Activated naive CD4-positive, alpha-beta T cell treated with anti-CD3 and anti-CD28 coated beads for 36 hours (primary cell): ENCODE measurements at regions of chr10 and their contacts with region 1.

Region 1: GRCh38 chr10:102713814-102714620 is at the start of gene ARL3:
- DNase-seq: peak; percentile 98
- H3K4me3 Mint-ChIP-seq: peak within 1 kb of the TSS; percentile 92
- H3K27ac Mint-ChIP-seq: peak within 1 kb of the TSS; percentile 79
- H3K4me1 Mint-ChIP-seq: peaks cover 44% of the 10 kb centered on the region
- H3K27me3 Mint-ChIP-seq: no peaks in the 10 kb centered on the region
- total RNA-seq, gene ARL3: 3.9 TPM

Region 2: DNA sequence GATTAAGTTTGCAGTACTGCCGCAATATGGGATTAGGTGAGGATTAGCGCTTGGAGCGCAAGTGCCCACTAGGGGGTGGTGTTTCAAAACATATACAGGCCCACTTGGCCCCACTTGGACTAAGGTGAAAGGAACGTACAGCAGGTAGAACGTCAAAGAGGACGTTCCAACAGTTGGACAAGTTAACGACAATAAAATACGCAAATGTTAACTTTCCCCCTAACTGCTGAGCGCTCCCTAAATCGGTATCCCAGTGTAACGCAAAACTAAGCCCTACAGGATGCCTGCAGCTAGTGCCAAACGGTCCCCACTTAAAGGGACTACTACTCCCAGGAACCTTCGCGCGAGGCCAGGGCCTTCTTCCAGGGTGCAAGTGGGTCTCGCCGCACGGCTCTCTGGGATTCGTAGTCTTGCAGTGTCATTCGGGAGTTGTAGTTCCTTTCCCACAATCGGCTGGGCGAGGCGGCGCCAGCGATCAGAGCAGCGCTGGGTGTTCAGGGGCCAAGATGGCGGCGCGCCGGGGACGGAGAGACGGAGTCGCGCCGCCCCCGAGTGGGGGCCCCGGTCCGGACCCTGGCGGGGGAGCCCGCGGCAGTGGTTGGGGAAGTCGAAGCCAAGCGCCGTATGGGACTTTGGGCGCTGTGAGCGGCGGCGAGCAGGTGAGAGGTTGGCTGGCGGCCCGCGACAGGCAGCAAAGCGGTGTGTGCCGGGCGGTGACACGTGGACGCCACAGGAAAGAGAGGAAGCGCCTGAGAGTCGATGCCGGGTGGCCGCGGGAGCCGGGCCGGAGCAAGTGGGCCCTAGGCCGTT is 581.2 kb before region 1 on chr10 and contains the start of gene PPRC1:
- CTCF ChIA-PET with region 1: no interaction called
- intact Hi-C with region 1: loop called (anchors 5 kb)
- DNase-seq: peak; percentile 99
- H3K4me3 Mint-ChIP-seq: peak within 1 kb of the TSS; percentile 97
- H3K27ac Mint-ChIP-seq: peak within 1 kb of the TSS; percentile 96
- H3K4me1 Mint-ChIP-seq: peaks cover 42% of the 10 kb centered on the region
- H3K27me3 Mint-ChIP-seq: no peaks in the 10 kb centered on the region
- total RNA-seq, gene PPRC1: 54.6 to 55.0 TPM

Region 3: GRCh38 chr10:102678842-102679289 is 35.2 kb before region 1 on chr10:
- CTCF ChIA-PET with region 1: interaction called, 38 read pairs
- intact Hi-C with region 1: loop called (anchors 2 kb)
- DNase-seq: no peak
- H3K4me3 Mint-ChIP-seq: no peak overlapping the region
- H3K27ac Mint-ChIP-seq: no peak overlapping the region
- H3K4me1 Mint-ChIP-seq: peaks cover 41% of the 10 kb centered on the region
- H3K27me3 Mint-ChIP-seq: no peaks in the 10 kb centered on the region

Region 4: GRCh38 chr10:102791754-102792395 is 77.9 kb after region 1 on chr10:
- CTCF ChIA-PET with region 1: no interaction called
- intact Hi-C with region 1: no loop called
- DNase-seq: no peak
- H3K4me3 Mint-ChIP-seq: no peak overlapping the region
- H3K27ac Mint-ChIP-seq: no peak overlapping the region
- H3K4me1 Mint-ChIP-seq: peaks cover 37% of the 10 kb centered on the region
- H3K27me3 Mint-ChIP-seq: no peaks in the 10 kb centered on the region

Region 5: GRCh38 chr10:102802920-102803534 is 89.0 kb after region 1 on chr10:
- CTCF ChIA-PET with region 1: no interaction called
- intact Hi-C with region 1: loop called (anchors 1 kb)
- DNase-seq: peak; percentile 66
- H3K4me3 Mint-ChIP-seq: no peak overlapping the region
- H3K27ac Mint-ChIP-seq: peak overlapping the region; percentile 93
- H3K4me1 Mint-ChIP-seq: peaks cover 35% of the 10 kb centered on the region
- H3K27me3 Mint-ChIP-seq: no peaks in the 10 kb centered on the region

Region 6: DNA sequence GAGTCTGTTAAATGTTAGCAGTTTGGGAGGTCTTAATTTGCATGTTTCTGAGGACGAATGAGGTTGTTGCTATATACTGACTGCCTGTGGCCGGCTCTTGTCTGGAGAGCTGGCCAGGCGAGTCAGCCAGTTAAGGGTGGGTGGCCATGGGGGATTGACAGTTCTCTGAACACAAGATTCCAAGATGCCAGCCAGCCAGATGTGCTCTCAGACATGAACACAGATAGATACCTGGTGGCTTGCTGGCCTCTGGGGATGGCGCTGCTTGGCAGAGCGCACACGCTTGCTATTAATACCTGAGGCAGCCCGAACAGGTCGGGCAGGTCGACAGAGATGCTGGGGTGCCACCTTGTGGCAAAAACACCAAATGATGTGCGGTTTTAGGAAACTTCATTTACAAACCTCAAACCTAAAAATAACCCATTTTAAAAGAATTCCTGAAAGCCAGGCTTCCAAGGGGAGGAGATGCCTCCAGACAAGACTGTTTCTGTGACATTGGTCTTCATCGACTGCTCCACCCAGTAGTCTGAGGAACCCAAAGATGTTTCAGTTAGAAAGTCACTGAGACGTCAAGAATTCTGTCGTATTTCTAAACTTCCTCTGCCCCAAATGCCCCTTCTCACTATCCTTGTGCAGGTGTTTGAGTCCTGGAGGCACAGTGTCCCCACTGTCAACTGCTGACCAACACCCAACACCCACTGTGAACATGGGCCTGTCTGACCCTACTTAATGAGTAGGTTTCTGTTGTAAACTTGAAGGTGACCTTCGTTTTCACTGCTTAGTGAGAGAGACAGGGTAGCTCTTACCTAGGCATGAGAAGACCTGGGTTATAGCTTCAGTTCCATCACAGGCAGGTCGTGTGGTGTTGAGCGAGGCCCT is 355.7 kb after region 1 on chr10:
- CTCF ChIA-PET with region 1: no interaction called
- intact Hi-C with region 1: loop called (anchors 10 kb)
- DNase-seq: peak; percentile 83
- H3K4me3 Mint-ChIP-seq: no peak overlapping the region
- H3K27ac Mint-ChIP-seq: no peak overlapping the region
- H3K4me1 Mint-ChIP-seq: peaks cover 17% of the 10 kb centered on the region
- H3K27me3 Mint-ChIP-seq: no peaks in the 10 kb centered on the region